ENCODE measurements at regions of chr1 and their contacts with region 1.

Region 1: GRCh38 chr1:198937231-198938031 is 298.6 kb downstream of the PTPRC start:
- DNase-seq: peak; percentile 84
- ATAC-seq: peak; percentile 85
- H3K4me3 ChIP-seq: peak overlapping the region; percentile 70 to 88
- H3K27ac ChIP-seq: peak overlapping the region; percentile 99
- H3K4me1 ChIP-seq: peaks cover 13% of the 10 kb centered on the region
- H3K27me3 ChIP-seq: no peaks in the 10 kb centered on the region
- CTCF ChIP-seq: no peak

Region 2: DNA sequence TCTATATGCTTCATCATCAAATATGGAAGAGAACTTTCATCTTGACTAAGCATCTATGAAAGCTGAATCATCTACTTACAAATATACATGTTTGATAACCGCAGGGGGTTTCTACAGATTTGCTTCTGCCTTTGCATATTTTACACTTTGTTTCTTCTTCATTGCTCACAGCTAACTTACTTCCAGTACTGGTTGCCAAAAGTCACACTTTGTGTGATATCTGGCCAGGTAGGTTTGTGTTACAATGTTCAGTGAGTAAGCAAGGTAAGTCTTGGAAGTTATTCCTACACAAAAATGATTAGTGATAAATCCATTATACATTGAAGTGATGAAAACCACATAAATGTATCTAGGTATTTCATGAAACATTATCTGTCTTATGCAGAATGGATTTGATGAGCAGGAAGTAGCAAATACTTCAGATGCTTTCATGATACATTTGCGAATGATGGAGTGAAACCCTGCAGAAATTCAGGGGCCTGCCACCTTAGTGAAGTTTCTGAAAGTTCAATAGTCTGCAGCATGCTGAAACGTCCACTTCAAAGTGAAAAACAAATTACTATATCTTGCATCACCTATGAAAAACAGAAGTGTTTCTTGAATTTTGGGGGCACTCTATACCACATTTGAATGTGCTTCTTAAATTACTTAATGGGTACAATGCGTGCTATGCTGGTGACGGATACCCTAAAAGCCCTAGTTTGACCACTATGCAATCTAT is 584.3 kb before region 1 on chr1:
- CTCF ChIA-PET with region 1: no interaction called
- POLR2A ChIA-PET with region 1: no interaction called
- in situ Hi-C with region 1: no loop called
- intact Hi-C with region 1: no loop called
- DNase-seq: no peak
- ATAC-seq: no peak
- H3K4me3 ChIP-seq: no peak overlapping the region
- H3K27ac ChIP-seq: no peak overlapping the region
- H3K4me1 ChIP-seq: no peaks in the 10 kb centered on the region
- H3K27me3 ChIP-seq: no peaks in the 10 kb centered on the region
- CTCF ChIP-seq: no peak

Region 3: GRCh38 chr1:198771563-198772153 is 165.8 kb before region 1 on chr1:
- CTCF ChIA-PET with region 1: no interaction called
- POLR2A ChIA-PET with region 1: no interaction called
- in situ Hi-C with region 1: no loop called
- intact Hi-C with region 1: loop called (anchors 5 kb)
- DNase-seq: no peak
- ATAC-seq: no peak
- H3K4me3 ChIP-seq: no peak overlapping the region
- H3K27ac ChIP-seq: no peak overlapping the region
- H3K4me1 ChIP-seq: no peaks in the 10 kb centered on the region
- H3K27me3 ChIP-seq: no peaks in the 10 kb centered on the region
- CTCF ChIP-seq: peak; percentile 60; the same call in 1 of the 2 replicates

Measured in Panc1 (cell line).